A673 (cell line): ENCODE measurements at regions of chr9 and their contacts with region 1.

Region 1: GRCh38 chr9:110152704-110153374 is 55.1 kb downstream of the C9orf152 start:
- DNase-seq: peak; percentile 74
- H3K4me3 ChIP-seq: no peak overlapping the region
- H3K27ac ChIP-seq: no peak overlapping the region
- H3K4me1 ChIP-seq: no peaks in the 10 kb centered on the region
- H3K27me3 ChIP-seq: no peaks in the 10 kb centered on the region
- CTCF ChIP-seq: peak; percentile 79

Region 2: DNA sequence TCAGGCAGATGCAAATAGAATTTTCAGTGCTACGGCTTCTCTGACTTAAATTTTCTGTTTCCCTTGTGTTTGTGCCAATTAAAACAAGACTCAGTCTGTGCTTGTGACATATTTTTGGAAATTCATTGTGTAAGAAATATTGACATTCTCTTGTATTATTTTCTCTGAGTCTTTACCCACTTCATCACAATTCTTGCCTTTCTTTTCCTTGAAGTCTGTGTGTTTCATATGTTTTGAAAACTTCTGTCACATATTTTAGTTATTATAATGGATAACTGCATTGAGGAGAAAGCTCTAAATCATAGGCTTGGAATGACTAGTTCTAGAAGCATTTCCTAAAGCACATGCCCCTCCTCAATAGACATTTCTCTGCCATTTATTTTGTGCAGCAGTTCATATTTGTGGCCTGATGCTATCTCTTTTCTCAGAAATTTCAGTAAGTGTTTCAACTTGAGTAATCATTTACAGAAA is 166.3 kb before region 1 on chr9:
- CTCF ChIA-PET with region 1: no interaction called
- POLR2A ChIA-PET with region 1: no interaction called
- intact Hi-C with region 1: no loop called
- DNase-seq: no peak
- H3K4me3 ChIP-seq: no peak overlapping the region
- H3K27ac ChIP-seq: no peak overlapping the region
- H3K4me1 ChIP-seq: no peaks in the 10 kb centered on the region
- H3K27me3 ChIP-seq: no peaks in the 10 kb centered on the region
- CTCF ChIP-seq: no peak

Region 3: GRCh38 chr9:110058304-110058953 is 94.4 kb before region 1 on chr9:
- CTCF ChIA-PET with region 1: no interaction called
- POLR2A ChIA-PET with region 1: no interaction called
- intact Hi-C with region 1: loop called (anchors 5 kb)
- DNase-seq: peak; percentile 65
- H3K4me3 ChIP-seq: no peak overlapping the region
- H3K27ac ChIP-seq: no peak overlapping the region
- H3K4me1 ChIP-seq: no peaks in the 10 kb centered on the region
- H3K27me3 ChIP-seq: no peaks in the 10 kb centered on the region
- CTCF ChIP-seq: peak; percentile 57